ENCODE measurements at regions of chr19 and their contacts with region 1.

Region 1: GRCh38 chr19:39474139-39474622 is 6.5 kb upstream of the TIMM50 start:
- H3K4me3 ChIP-seq: no peak overlapping the region
- H3K27ac ChIP-seq: no peak overlapping the region
- H3K4me1 ChIP-seq: no peaks in the 10 kb centered on the region
- CTCF ChIP-seq: peak; percentile 99

Region 2: GRCh38 chr19:39381910-39382611 is 92.1 kb before region 1 on chr19:
- CTCF ChIA-PET with region 1: no interaction called
- POLR2A ChIA-PET with region 1: no interaction called
- H3K4me3 ChIP-seq: no peak overlapping the region
- H3K27ac ChIP-seq: peak overlapping the region; percentile 52; the same call in 1 of the 2 replicates
- H3K4me1 ChIP-seq: peaks cover 6% of the 10 kb centered on the region
- CTCF ChIP-seq: no peak

Region 3: DNA sequence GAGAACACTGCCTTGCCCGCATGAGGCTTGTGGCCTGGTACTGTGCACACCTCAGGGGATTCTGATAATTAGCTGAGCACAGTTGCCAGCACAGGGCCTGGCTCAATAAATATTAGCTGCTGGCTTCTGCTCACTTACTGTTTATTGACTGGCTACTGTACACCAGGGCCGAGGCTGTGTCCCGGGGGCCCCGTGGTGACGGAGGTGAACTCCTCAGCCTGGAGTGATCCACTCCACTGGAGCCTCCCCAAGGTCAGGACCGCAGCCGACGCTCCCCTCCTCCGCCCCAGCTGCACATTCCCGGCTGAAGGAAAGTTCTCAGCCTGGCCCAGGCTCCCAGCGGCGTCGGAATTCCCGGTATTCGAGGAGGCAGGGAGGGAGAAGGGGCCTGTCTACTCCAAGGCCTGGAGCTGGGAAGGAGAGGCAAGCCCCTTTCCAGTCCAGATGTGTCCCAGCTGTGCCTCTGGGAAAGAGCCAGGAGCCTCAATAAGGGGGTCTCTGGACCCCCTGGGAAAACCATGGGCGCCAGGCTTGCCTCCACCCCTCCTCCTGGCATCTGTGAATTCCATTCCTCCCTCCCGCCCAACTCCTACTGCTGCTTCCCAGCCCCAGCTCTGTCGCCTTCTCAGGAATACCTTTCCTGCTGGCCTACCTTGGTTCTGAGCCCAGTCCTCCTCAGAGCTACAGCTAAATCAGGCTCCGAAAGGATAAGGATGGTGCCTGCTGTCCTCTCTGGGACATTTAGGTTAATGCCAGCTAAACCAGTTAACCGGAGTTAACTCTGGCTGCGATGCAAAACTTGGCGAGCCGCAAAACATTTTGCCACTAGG is 45.7 kb before region 1 on chr19:
- CTCF ChIA-PET with region 1: interaction called, 20 read pairs
- POLR2A ChIA-PET with region 1: no interaction called
- H3K4me3 ChIP-seq: no peak overlapping the region
- H3K27ac ChIP-seq: peak overlapping the region; percentile 40; the same call in 1 of the 2 replicates
- H3K4me1 ChIP-seq: peaks cover 10% of the 10 kb centered on the region
- CTCF ChIP-seq: no peak; the same call in 1 of the 2 replicates

Region 4: DNA sequence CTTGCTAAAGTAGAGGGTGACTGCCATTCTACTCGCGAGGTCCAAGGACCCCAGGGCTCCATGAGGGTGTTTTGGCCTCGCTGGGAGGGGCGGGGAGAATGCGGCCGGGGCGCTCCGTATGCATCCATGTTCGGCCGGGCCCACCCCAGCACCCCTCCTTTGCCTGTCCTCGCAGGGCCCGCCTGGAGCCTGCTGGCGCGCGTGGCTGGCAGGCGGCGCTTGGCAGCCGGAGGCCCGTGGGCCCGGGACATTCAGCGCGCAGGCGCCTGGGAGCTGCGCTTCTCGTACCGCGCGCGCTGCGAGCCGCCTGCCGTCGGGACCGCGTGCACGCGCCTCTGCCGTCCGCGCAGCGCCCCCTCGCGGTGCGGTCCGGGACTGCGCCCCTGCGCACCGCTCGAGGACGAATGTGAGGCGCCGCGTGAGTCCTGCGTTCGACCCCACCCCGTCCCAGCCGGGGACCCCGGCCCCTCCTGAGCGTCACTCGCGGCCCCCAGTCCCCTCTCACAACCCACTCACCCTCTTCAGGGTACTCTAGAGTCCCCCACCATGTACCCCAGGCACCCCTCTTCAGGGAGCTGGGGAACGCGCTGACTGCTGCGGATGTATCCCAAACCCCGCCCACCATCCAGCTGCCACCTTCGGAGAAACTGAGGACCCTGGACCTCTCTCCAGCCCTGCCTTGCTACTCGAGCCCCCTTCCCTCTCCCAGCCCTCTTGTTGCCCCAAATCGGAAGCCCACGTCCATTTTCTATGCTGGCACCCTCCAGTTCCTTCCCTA is 28.6 kb after region 1 on chr19:
- CTCF ChIA-PET with region 1: interaction called, 47 read pairs
- POLR2A ChIA-PET with region 1: interaction called, 3 read pairs
- H3K4me3 ChIP-seq: no peak overlapping the region
- H3K27ac ChIP-seq: no peak overlapping the region
- H3K4me1 ChIP-seq: peaks cover 19% of the 10 kb centered on the region
- CTCF ChIP-seq: peak; percentile 71

Region 5: DNA sequence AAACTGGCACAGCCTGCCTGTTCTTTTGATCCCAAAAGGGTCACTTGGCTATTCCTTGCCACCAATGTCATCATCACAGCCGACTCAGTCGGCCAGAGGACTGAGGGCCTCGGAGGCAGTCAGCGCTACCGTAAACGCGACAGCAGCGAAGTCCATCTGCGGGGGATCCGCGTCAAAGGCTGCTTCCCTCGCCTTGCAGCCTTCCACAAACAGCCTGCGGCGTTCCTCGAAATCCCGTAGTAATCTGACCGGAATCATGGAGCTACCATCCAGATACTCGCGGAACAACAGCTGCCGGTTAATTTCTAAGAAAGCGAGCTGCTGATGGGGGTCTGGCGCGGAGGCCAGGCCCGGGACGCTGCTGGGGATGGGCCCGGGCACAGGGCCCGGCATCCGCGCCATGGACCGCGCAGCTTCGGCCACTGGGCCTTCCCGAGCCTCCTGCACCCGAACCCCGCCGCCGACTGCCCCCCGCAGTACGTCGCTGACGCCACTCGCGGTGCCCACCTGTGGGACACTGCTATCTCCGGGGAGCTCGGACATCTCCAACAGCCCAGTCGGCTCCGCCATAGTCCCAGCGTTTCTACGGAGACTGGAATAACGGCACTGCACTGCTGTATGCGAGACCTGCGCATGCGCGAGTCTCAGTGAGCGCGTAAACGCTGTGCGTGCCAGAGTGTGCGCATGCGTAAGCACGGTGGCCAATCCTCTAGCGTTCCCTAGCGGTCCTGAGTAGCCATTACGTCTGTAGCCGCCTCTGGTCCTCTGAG is 58.2 kb after region 1 on chr19 and contains the start of gene EID2B:
- CTCF ChIA-PET with region 1: interaction called, 174 read pairs
- POLR2A ChIA-PET with region 1: interaction called, 6 read pairs
- H3K4me3 ChIP-seq: peak within 1 kb of the TSS; percentile 88
- H3K27ac ChIP-seq: peak within 1 kb of the TSS; percentile 85
- H3K4me1 ChIP-seq: peaks cover 20% of the 10 kb centered on the region
- CTCF ChIP-seq: peak; percentile 100

Region 6: DNA sequence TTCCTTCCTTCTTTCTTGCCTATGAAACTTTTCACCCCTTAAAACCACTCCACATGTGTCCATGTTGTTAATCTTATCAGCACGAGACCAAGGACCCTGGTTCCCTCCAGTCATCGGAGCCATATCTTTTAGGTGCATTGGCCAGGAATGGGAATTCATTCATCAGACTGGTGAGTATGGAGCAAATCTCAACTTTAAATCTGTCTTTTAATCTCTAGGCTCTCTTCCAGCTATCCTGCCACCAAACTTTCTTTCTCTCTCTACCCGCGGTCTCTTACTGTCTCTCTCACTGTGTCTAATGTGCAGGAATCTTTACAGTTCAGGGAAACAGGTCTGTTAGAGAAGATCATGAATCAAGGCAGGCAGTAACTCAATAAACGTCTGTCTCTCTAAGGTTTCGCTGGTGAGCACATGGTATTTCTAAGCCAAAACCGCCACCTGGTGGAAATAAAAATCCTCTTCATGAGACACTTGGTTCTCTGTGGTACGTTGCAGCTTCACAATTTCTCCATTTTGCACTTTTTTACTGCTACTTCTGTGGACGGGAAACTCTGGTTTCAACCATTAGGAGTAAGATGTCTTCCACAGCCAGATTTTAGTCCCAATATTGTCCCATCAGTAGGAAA is 197.7 kb after region 1 on chr19:
- CTCF ChIA-PET with region 1: interaction called, 15 read pairs
- POLR2A ChIA-PET with region 1: no interaction called
- H3K4me3 ChIP-seq: no peak overlapping the region
- H3K27ac ChIP-seq: no peak overlapping the region
- H3K4me1 ChIP-seq: no peaks in the 10 kb centered on the region
- CTCF ChIP-seq: peak; percentile 94

Measured in HEK293 (cell line).